ENCODE measurements at regions of chr14 and their contacts with region 1.

Region 1: GRCh38 chr14:77151918-77152588 is 10.5 kb upstream of the ZDHHC22 start:
- DNase-seq: peak; percentile 28
- ATAC-seq: peak; percentile 89
- H3K4me3 ChIP-seq: no peak overlapping the region
- H3K27ac ChIP-seq: no peak overlapping the region
- H3K4me1 ChIP-seq: no peaks in the 10 kb centered on the region
- H3K27me3 ChIP-seq: peaks cover 28% of the 10 kb centered on the region
- CTCF ChIP-seq: peak; percentile 39
- POLR2A ChIP-seq: no peak
- RAD21 ChIP-seq: peak; percentile 47

Region 2: GRCh38 chr14:77314043-77314442 is 162.0 kb after region 1 on chr14:
- CTCF ChIA-PET with region 1: interaction called, 13 read pairs
- POLR2A ChIA-PET with region 1: no interaction called
- dilution Hi-C with region 1: no loop called
- in situ Hi-C with region 1: loop called (anchors 5 kb)
- intact Hi-C with region 1: loop called (anchors 1 kb)
- DNase-seq: peak; percentile 89
- ATAC-seq: peak; percentile 92
- H3K4me3 ChIP-seq: no peak overlapping the region
- H3K27ac ChIP-seq: peak overlapping the region; percentile 25
- H3K4me1 ChIP-seq: peaks cover 15% of the 10 kb centered on the region
- H3K27me3 ChIP-seq: no peaks in the 10 kb centered on the region
- CTCF ChIP-seq: no peak
- POLR2A ChIP-seq: no peak
- RAD21 ChIP-seq: 0 out of 2 replicates have a peak, but pooled peaks have one; percentile 6

Measured in IMR-90 (cell line).